Breast epithelium (tissue), 4 donors: ENCODE measurements at regions of chr1 and their contacts with region 1.

Region 1: GRCh38 chr1:116033322-116033721 is 57.0 kb downstream of the SLC22A15 start:
- DNase-seq: no peak
- H3K4me3 ChIP-seq: no peak overlapping the region
- H3K27ac ChIP-seq: no peak overlapping the region
- H3K4me1 ChIP-seq: no peaks in the 10 kb centered on the region
- H3K27me3 ChIP-seq: no peaks in the 10 kb centered on the region
- CTCF ChIP-seq: no peak
- POLR2A ChIP-seq: no peak

Region 2: GRCh38 chr1:115012006-115012405 is 1021.3 kb before region 1 on chr1:
- intact Hi-C with region 1: loop called (anchors 5 kb)
- DNase-seq: no peak
- H3K4me3 ChIP-seq: no peak overlapping the region
- H3K27ac ChIP-seq: no peak overlapping the region
- H3K4me1 ChIP-seq: no peaks in the 10 kb centered on the region
- H3K27me3 ChIP-seq: no peaks in the 10 kb centered on the region
- CTCF ChIP-seq: no peak
- POLR2A ChIP-seq: no peak

Region 3: DNA sequence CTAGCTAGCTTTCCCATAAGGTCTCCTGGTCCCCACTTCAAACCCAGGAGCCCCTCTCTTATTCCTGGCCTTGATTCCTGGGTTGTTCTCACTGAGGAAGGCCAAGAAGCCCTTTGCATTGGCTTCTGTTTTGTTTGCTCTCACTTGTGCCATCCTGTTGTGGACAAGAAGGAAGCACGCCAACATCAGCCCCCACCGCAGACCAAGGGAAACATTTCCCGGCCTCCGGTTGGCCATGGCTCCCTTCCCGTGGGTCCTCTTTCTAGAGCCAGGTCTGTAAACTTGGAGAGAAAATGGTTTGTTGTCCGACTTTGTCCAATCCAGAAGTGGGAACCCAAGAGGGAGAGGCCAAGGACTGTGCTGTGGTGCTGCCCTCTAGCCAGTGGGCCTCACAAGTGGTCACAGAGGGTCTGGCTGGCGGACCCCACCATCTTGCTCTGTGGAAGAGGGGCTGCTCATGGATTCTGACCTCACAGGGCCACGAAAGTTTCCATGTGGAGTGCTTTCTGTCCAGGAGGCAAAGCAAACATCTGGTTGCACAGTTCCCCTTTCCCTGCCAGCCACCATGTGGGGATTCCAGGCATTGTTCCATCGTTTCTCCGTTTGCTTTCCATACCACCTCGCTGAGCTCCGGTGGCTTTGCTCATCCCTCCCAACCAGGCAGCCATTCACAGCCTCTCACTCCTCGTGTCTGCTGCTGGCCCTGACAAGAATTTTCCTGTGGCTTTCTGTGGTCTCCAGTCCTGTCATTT is 1553.6 kb after region 1 on chr1:
- intact Hi-C with region 1: loop called (anchors 5 kb)
- DNase-seq: no peak
- H3K4me3 ChIP-seq: no peak overlapping the region
- H3K27ac ChIP-seq: no peak overlapping the region
- H3K4me1 ChIP-seq: peaks cover 0 to 4% of the 10 kb centered on the region in 2 donors
- H3K27me3 ChIP-seq: no peaks in the 10 kb centered on the region
- CTCF ChIP-seq: no peak
- POLR2A ChIP-seq: no peak